B cell (primary cell): ENCODE measurements at regions of chr4 and their contacts with region 1.

Region 1: GRCh38 chr4:40325189-40326019 is 9.7 kb upstream of the CHRNA9 start:
- DNase-seq: peak; percentile 81
- ATAC-seq: peak; percentile 100
- H3K4me3 ChIP-seq: no peak overlapping the region
- H3K4me3 Mint-ChIP-seq: no peak overlapping the region
- H3K27ac ChIP-seq: no peak overlapping the region
- H3K27ac Mint-ChIP-seq: peak overlapping the region; percentile 46
- H3K4me1 ChIP-seq: peaks cover 8 to 14% of the 10 kb centered on the region in 2 donors
- H3K4me1 Mint-ChIP-seq: peaks cover 18% of the 10 kb centered on the region
- H3K27me3 ChIP-seq: peaks cover 0 to 4% (median 0%) of the 10 kb centered on the region in 4 experiments
- H3K27me3 Mint-ChIP-seq: peaks cover 8% of the 10 kb centered on the region
- CTCF ChIP-seq: peak; percentile 96

Region 2: DNA sequence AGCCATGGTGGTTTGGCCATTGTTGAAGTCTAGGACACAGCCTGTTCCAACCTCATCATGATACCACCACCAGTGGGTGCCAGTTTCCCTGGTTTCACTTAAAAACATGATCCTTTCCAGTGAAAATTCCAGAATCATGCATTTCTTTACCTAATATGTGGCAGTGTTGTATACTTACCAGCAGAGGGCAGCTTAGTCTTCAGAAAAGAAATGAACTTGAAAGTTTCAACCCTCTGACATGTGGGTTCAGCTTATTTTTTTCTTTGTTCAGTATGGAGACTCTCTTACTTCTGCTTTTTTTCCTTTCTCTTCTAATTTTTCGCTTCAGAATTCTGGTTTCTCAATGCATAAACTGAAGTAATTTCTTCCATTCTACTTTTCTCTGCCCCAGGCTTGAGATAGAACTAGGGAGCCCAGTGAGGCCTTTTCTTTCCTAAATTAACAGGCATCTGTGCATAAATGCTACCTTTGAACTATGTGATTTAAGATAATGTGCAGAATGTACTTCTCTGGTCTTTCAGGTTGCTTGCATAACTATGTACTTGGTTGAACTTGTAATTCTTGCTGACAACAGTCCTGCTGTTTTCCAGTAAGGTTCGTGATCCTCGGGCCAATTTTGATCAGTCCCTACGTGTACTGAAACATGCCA is 855.9 kb before region 1 on chr4:
- CTCF ChIA-PET with region 1: interaction called, 16 read pairs
- POLR2A ChIA-PET with region 1: no interaction called
- intact Hi-C with region 1: loop called (anchors 5 kb)
- DNase-seq: peak; percentile 81
- ATAC-seq: peak; percentile 99
- H3K4me3 ChIP-seq: peak overlapping the region in 1 of 5 experiments; percentile 14
- H3K4me3 Mint-ChIP-seq: peak overlapping the region; percentile 59
- H3K27ac ChIP-seq: peak overlapping the region; percentile 36 to 68
- H3K27ac Mint-ChIP-seq: peak overlapping the region; percentile 92
- H3K4me1 ChIP-seq: peaks cover 5 to 7% of the 10 kb centered on the region in 2 donors
- H3K4me1 Mint-ChIP-seq: peaks cover 9% of the 10 kb centered on the region
- H3K27me3 ChIP-seq: no peaks in the 10 kb centered on the region
- H3K27me3 Mint-ChIP-seq: no peaks in the 10 kb centered on the region
- CTCF ChIP-seq: peak; percentile 87

Region 3: DNA sequence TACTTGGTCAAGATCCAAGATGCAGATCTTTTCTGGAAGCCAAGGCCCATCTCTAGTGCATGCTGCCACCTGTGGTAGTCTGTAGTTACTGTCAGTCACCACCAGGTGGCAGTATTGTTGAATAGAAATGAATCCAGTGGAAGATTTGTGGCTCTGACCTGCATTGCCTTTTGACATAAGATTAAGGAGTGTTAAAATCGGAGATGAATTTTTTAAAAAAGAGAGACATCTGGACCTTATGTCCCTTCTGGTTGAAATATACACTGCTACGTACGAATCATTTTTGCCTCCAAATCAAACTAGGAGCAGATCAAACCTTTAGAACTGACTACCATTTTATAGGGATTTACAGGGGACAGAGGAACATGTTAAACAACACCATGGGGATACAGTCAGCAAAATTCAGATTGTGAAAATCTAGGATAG is 175.4 kb before region 1 on chr4:
- CTCF ChIA-PET with region 1: interaction called, 69 read pairs
- POLR2A ChIA-PET with region 1: no interaction called
- intact Hi-C with region 1: loop called (anchors 1 kb)
- DNase-seq: peak; percentile 87
- ATAC-seq: peak; percentile 95
- H3K4me3 ChIP-seq: no peak overlapping the region
- H3K4me3 Mint-ChIP-seq: peak overlapping the region; percentile 27
- H3K27ac ChIP-seq: peak overlapping the region; percentile 20 to 54
- H3K27ac Mint-ChIP-seq: peak overlapping the region; percentile 77
- H3K4me1 ChIP-seq: peaks cover 22 to 32% of the 10 kb centered on the region in 2 donors
- H3K4me1 Mint-ChIP-seq: peaks cover 38% of the 10 kb centered on the region
- H3K27me3 ChIP-seq: no peaks in the 10 kb centered on the region
- H3K27me3 Mint-ChIP-seq: no peaks in the 10 kb centered on the region
- CTCF ChIP-seq: peak; percentile 83

Region 4: DNA sequence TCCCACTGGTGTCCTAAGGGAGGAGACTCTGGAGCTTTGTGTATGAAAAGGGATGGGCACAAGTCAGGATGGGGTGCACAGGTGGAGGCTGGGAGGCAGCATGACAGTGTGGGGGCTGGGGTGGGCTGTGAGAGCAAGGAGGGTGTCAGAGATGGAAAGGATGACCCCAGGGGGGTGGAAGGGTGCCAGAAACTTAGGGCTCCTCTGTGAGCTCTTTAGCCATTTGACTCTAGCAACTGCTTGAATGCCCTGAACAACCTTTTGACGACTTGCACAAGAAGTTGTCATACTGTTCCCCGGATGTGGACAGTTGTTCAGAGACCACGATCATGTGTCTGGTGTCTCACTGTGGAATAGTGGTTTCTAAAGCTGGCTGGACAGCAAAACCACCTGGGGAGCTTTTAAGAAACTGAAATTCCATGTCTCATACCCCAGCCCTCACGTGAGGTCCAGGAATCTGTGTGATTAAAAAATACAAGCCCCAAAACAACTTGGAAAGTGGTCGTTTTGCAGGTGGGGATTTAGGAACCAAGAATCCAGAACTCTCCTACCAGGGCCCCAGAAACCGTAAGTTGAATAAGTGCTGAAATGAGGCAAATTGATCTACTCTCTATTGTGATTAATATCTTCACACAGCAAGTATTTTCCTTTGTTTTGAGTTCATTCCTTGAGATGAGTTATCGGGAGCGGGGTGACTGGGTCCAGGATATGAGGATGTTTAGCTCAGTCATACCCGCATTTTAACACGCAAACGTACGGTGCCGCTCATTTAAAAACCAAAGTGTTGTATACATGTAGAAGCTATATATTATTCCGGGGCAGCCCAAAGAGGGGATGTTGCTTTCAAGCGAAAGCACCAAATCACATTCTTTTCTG is 125.2 kb before region 1 on chr4:
- CTCF ChIA-PET with region 1: interaction called, 11 read pairs
- POLR2A ChIA-PET with region 1: no interaction called
- intact Hi-C with region 1: no loop called
- DNase-seq: peak; percentile 63
- ATAC-seq: peak; percentile 19
- H3K4me3 ChIP-seq: peak overlapping the region; percentile 79 to 99 (median 90)
- H3K4me3 Mint-ChIP-seq: peak overlapping the region; percentile 96
- H3K27ac ChIP-seq: peak overlapping the region; percentile 93 to 99
- H3K27ac Mint-ChIP-seq: peak overlapping the region; percentile 91
- H3K4me1 ChIP-seq: peaks cover 53 to 60% of the 10 kb centered on the region in 2 donors
- H3K4me1 Mint-ChIP-seq: peaks cover 64% of the 10 kb centered on the region
- H3K27me3 ChIP-seq: no peaks in the 10 kb centered on the region
- H3K27me3 Mint-ChIP-seq: no peaks in the 10 kb centered on the region
- CTCF ChIP-seq: no peak

Region 5: GRCh38 chr4:40363382-40363920 is 38.0 kb after region 1 on chr4:
- CTCF ChIA-PET with region 1: no interaction called
- POLR2A ChIA-PET with region 1: no interaction called
- intact Hi-C with region 1: no loop called
- DNase-seq: no peak
- ATAC-seq: no peak
- H3K4me3 ChIP-seq: no peak overlapping the region
- H3K4me3 Mint-ChIP-seq: no peak overlapping the region
- H3K27ac ChIP-seq: no peak overlapping the region
- H3K27ac Mint-ChIP-seq: no peak overlapping the region
- H3K4me1 ChIP-seq: peaks cover 0 to 5% of the 10 kb centered on the region in 2 donors
- H3K4me1 Mint-ChIP-seq: peaks cover 3% of the 10 kb centered on the region
- H3K27me3 ChIP-seq: no peaks in the 10 kb centered on the region
- H3K27me3 Mint-ChIP-seq: no peaks in the 10 kb centered on the region
- CTCF ChIP-seq: no peak

Region 6: DNA sequence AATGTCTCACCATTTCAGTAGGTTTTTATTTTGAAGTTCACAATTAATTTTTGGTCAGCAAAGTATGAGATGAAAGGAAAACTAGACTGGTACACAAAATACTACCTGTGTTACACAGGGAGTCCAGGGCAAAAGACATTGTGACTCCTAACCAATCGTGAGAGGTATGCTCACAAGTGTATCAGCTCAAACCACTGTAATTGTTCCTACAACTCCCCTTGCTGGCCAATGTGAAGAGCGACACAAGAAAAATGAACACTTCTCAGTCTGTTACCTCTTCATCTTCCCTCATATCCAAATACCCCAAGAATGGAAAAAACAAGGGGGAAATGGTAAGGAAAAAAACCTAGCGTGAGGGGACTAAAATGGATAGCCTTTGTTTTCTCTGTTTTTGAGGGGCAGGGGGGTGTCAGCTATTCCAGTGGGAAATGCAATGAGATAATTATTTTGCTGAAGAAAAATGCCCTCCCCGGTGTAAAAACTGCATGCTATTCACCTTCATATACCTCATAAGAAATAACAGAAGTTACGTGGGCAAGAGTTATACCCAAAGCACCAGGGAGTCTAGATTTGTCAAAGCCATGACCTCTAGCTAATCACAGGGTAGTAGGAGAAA is 393.7 kb after region 1 on chr4:
- CTCF ChIA-PET with region 1: interaction called, 8 read pairs
- POLR2A ChIA-PET with region 1: no interaction called
- intact Hi-C with region 1: loop called (anchors 10 kb)
- DNase-seq: peak; percentile 41
- ATAC-seq: no peak
- H3K4me3 ChIP-seq: no peak overlapping the region
- H3K4me3 Mint-ChIP-seq: no peak overlapping the region
- H3K27ac ChIP-seq: no peak overlapping the region
- H3K27ac Mint-ChIP-seq: no peak overlapping the region
- H3K4me1 ChIP-seq: peaks cover 21 to 30% of the 10 kb centered on the region in 2 donors
- H3K4me1 Mint-ChIP-seq: peaks cover 8% of the 10 kb centered on the region
- H3K27me3 ChIP-seq: no peaks in the 10 kb centered on the region
- H3K27me3 Mint-ChIP-seq: no peaks in the 10 kb centered on the region
- CTCF ChIP-seq: no peak